ENCODE measurements at regions of chr15 and their contacts with region 1.

Region 1: DNA sequence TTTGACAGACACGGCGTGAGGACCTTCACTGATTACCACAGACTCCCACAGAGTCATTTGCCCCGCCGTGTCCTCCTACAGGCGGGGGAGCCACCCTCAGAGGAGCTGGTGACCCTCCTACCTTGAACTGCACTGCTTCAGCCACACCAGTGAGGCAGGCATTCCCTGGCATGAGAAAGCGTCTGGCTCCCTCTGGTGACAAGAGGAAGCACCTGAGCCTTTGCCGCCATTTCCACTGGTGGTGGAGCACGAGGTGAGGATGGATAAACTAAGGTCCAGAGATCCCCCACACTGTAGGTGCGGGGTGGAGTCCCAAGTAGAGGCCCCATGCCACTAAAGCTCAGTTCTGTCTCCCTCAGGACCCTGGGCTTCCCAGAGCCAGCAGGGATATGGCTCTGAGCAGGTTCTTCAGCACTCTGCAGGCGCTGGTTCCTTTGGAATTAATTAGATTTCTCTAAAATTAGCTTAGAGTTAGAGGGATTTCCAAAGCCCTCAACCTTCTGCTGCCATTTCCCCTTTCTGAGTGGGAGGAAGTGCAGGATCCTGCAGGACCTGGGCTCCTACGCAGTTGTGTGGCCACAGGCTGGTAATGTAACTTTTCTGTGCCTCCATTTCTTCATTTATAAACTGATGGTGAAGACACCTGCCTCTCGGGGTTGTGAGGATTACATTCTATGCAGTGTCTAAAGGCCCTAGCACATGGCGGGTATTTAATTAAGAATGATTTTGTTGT is 224.0 kb downstream of the SLCO3A1 start:
- DNase-seq: peak; percentile 67 to 83
- ATAC-seq: peak; percentile 71 to 84 (median 76)
- H3K4me3 ChIP-seq: no peak overlapping the region
- H3K27ac ChIP-seq: no peak overlapping the region
- H3K4me1 ChIP-seq: peaks cover 9 to 70% (median 61%) of the 10 kb centered on the region in 9 donors
- H3K27me3 ChIP-seq: no peaks in the 10 kb centered on the region
- CTCF ChIP-seq: peak; percentile 59 to 91 (median 78)

Region 2: GRCh38 chr15:91291673-91292072 is 785.8 kb before region 1 on chr15:
- intact Hi-C with region 1: loop called in 1 of 10 experiments (anchors 5 kb)
- DNase-seq: peak in 1 of 2 donors; percentile 11
- ATAC-seq: peak in 4 of 8 donors; percentile 32 to 61 (median 50)
- H3K4me3 ChIP-seq: no peak overlapping the region
- H3K27ac ChIP-seq: no peak overlapping the region
- H3K4me1 ChIP-seq: peaks cover 0 to 3% (median 0%) of the 10 kb centered on the region in 9 donors
- H3K27me3 ChIP-seq: no peaks in the 10 kb centered on the region
- CTCF ChIP-seq: no peak

Region 3: GRCh38 chr15:91311986-91312385 is 765.5 kb before region 1 on chr15:
- intact Hi-C with region 1: loop called in 1 of 10 experiments (anchors 5 kb)
- DNase-seq: no peak
- ATAC-seq: no peak
- H3K4me3 ChIP-seq: no peak overlapping the region
- H3K27ac ChIP-seq: peak overlapping the region in 1 of 10 donors; percentile 5
- H3K4me1 ChIP-seq: peaks cover 0 to 22% (median 0%) of the 10 kb centered on the region in 9 donors
- H3K27me3 ChIP-seq: peaks cover 0 to 13% (median 0%) of the 10 kb centered on the region in 7 donors
- CTCF ChIP-seq: no peak

Region 4: GRCh38 chr15:91885714-91886270 is 191.7 kb before region 1 on chr15:
- intact Hi-C with region 1: loop called in 1 of 10 experiments (anchors 10 kb)
- DNase-seq: no peak
- ATAC-seq: peak in 5 of 8 donors; percentile 37 to 52 (median 40)
- H3K4me3 ChIP-seq: no peak overlapping the region
- H3K27ac ChIP-seq: no peak overlapping the region
- H3K4me1 ChIP-seq: peaks cover 3 to 87% (median 52%) of the 10 kb centered on the region in 9 donors
- H3K27me3 ChIP-seq: no peaks in the 10 kb centered on the region
- CTCF ChIP-seq: peak in 5 of 9 donors; percentile 23 to 51 (median 40)

Region 5: GRCh38 chr15:91947683-91948608 is 129.6 kb before region 1 on chr15:
- intact Hi-C with region 1: loop called in 8 of 10 experiments (anchors 2 to 10 kb)
- DNase-seq: peak; percentile 49 to 56
- ATAC-seq: peak; percentile 49 to 77 (median 58)
- H3K4me3 ChIP-seq: no peak overlapping the region
- H3K27ac ChIP-seq: peak overlapping the region in 9 of 10 donors; percentile 51 to 87 (median 72)
- H3K4me1 ChIP-seq: peaks cover 36 to 96% (median 71%) of the 10 kb centered on the region in 9 donors
- H3K27me3 ChIP-seq: no peaks in the 10 kb centered on the region
- CTCF ChIP-seq: no peak

Measured in heart right ventricle (tissue), 16 donors.